CD4-positive, alpha-beta T cell (primary cell): ENCODE measurements at regions of chr2 and their contacts with region 1.

Region 1: GRCh38 chr2:44181648-44182047 is 13.0 kb downstream of the PPM1B start:
- DNase-seq: no peak
- ATAC-seq: no peak
- H3K4me3 ChIP-seq: no peak overlapping the region
- H3K4me3 Mint-ChIP-seq: peak overlapping the region; percentile 50
- H3K27ac ChIP-seq: no peak overlapping the region
- H3K27ac Mint-ChIP-seq: peak overlapping the region; percentile 12
- H3K4me1 ChIP-seq: peaks cover 37% of the 10 kb centered on the region
- H3K4me1 Mint-ChIP-seq: peaks cover 80% of the 10 kb centered on the region
- H3K27me3 ChIP-seq: no peaks in the 10 kb centered on the region
- H3K27me3 Mint-ChIP-seq: no peaks in the 10 kb centered on the region
- CTCF ChIP-seq: no peak

Region 2: GRCh38 chr2:44155666-44156446 is 25.8 kb before region 1 on chr2:
- CTCF ChIA-PET with region 1: no interaction called
- POLR2A ChIA-PET with region 1: no interaction called
- intact Hi-C with region 1: no loop called
- DNase-seq: no peak
- ATAC-seq: no peak
- H3K4me3 ChIP-seq: no peak overlapping the region
- H3K4me3 Mint-ChIP-seq: no peak overlapping the region
- H3K27ac ChIP-seq: no peak overlapping the region
- H3K27ac Mint-ChIP-seq: no peak overlapping the region
- H3K4me1 ChIP-seq: no peaks in the 10 kb centered on the region
- H3K4me1 Mint-ChIP-seq: no peaks in the 10 kb centered on the region
- H3K27me3 ChIP-seq: peaks cover 0 to under 1% of the 10 kb centered on the region in 2 experiments
- H3K27me3 Mint-ChIP-seq: no peaks in the 10 kb centered on the region
- CTCF ChIP-seq: no peak

Region 3: DNA sequence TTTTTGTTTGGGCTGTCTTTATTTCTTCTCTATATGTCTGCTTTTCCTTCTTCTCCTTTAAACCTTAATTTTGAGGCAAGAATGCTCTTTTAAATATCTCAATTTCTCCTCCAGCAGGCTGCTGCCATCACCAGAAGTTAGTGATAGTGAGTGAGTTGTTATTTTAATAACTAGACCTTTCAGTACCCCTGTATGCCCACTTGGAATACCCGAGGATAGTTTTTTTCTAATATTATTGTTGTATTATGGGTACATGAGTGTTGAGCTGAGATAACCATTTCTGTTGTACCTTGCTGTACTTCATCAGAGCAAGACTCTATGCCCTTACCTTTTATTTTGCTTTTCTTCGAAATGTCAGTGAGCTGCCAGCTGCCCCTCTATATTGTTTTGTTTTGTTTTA is 37.1 kb after region 1 on chr2:
- CTCF ChIA-PET with region 1: no interaction called
- POLR2A ChIA-PET with region 1: no interaction called
- intact Hi-C with region 1: loop called in 1 of 2 experiments (anchors 5 kb)
- DNase-seq: no peak
- ATAC-seq: no peak
- H3K4me3 ChIP-seq: no peak overlapping the region
- H3K4me3 Mint-ChIP-seq: no peak overlapping the region
- H3K27ac ChIP-seq: no peak overlapping the region
- H3K27ac Mint-ChIP-seq: peak overlapping the region; percentile 2
- H3K4me1 ChIP-seq: no peaks in the 10 kb centered on the region
- H3K4me1 Mint-ChIP-seq: peaks cover 26% of the 10 kb centered on the region
- H3K27me3 ChIP-seq: no peaks in the 10 kb centered on the region
- H3K27me3 Mint-ChIP-seq: no peaks in the 10 kb centered on the region
- CTCF ChIP-seq: no peak